ENCODE measurements at regions of chrX and their contacts with region 1.

Region 1: DNA sequence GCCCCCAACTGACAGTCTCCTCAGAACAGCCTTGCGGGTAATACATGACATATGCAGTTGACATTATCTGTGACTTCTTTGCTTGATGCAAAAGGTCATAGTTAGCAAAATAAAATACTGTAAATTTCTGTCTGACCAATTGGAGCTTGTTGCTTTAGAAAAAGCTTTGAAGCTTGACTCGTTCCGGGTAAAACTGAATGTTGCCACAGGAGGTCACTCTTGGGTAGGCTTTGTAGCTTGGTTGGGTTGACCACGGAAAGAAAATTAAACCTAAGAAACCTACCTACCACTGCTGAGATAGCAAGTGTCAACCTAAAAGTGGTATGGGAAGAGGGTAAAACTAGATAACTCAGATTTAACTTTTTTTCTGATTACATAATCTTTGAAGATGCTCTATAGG is 23.2 kb downstream of the PRPS2 start:
- DNase-seq: peak; percentile 59
- ATAC-seq: peak; percentile 97
- H3K4me3 ChIP-seq: no peak overlapping the region
- H3K27ac ChIP-seq: no peak overlapping the region
- H3K4me1 ChIP-seq: no peaks in the 10 kb centered on the region
- H3K27me3 ChIP-seq: no peaks in the 10 kb centered on the region
- CTCF ChIP-seq: peak; percentile 66 to 86 (median 69)
- EP300 ChIP-seq: no peak
- POLR2A ChIP-seq: no peak
- RAD21 ChIP-seq: peak; percentile 98

Region 2: DNA sequence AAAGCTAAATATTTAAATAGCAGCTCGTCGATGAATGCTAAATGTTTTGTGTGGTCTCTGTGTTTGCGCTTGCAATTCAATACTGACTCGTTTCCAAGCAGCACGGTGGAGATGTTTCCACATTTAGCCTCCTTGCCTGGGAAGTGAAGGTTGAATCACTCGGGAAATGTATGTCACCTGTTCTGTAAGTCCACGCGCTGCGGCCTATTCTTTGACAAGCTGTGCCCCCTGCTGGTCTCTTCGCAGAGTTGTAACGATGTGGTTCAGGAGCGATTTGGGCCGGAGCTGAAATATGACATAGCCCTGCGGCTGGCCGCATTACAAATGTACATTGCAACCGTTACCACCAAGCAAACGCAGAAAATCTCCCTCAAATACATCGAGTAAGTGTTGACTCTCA is 112.8 kb before region 1 on chrX:
- CTCF ChIA-PET with region 1: no interaction called
- POLR2A ChIA-PET with region 1: no interaction called
- RAD21 ChIA-PET with region 1: no interaction called
- SMC1A ChIA-PET with region 1: interaction called, 11 read pairs
- in situ Hi-C with region 1: no loop called
- intact Hi-C with region 1: no loop called
- DNase-seq: peak; percentile 12
- ATAC-seq: peak; percentile 98
- H3K4me3 ChIP-seq: no peak overlapping the region
- H3K27ac ChIP-seq: no peak overlapping the region
- H3K4me1 ChIP-seq: no peaks in the 10 kb centered on the region
- H3K27me3 ChIP-seq: no peaks in the 10 kb centered on the region
- CTCF ChIP-seq: peak; percentile 70 to 84 (median 71)
- EP300 ChIP-seq: no peak
- POLR2A ChIP-seq: no peak
- RAD21 ChIP-seq: peak; percentile 86

Region 3: GRCh38 chrX:12791257-12792228 is 22.9 kb before region 1 on chrX and contains the start of gene PRPS2:
- CTCF ChIA-PET with region 1: interaction called, 18 read pairs
- POLR2A ChIA-PET with region 1: no interaction called
- RAD21 ChIA-PET with region 1: interaction called, 20 read pairs
- SMC1A ChIA-PET with region 1: interaction called, 27 read pairs
- in situ Hi-C with region 1: no loop called
- intact Hi-C with region 1: no loop called
- DNase-seq: no peak
- ATAC-seq: peak; percentile 88
- H3K4me3 ChIP-seq: peak within 1 kb of the TSS; percentile 75
- H3K27ac ChIP-seq: peak within 1 kb of the TSS; percentile 58
- H3K4me1 ChIP-seq: no peaks in the 10 kb centered on the region
- H3K27me3 ChIP-seq: no peaks in the 10 kb centered on the region
- CTCF ChIP-seq: no peak
- EP300 ChIP-seq: no peak
- POLR2A ChIP-seq: peak; percentile 87
- RAD21 ChIP-seq: no peak
- polyA plus RNA-seq, gene PRPS2: 44.1 to 56.3 TPM

Region 4: GRCh38 chrX:12843668-12844279 is 29.4 kb after region 1 on chrX:
- CTCF ChIA-PET with region 1: interaction called, 23 read pairs
- POLR2A ChIA-PET with region 1: no interaction called
- RAD21 ChIA-PET with region 1: interaction called, 11 read pairs
- SMC1A ChIA-PET with region 1: interaction called, 28 read pairs
- in situ Hi-C with region 1: no loop called
- intact Hi-C with region 1: loop called (anchors 2 kb)
- DNase-seq: peak; percentile 85
- ATAC-seq: peak; percentile 92
- H3K4me3 ChIP-seq: peak overlapping the region; percentile 42; the same call in 1 of the 2 replicates
- H3K27ac ChIP-seq: peak overlapping the region; percentile 100
- H3K4me1 ChIP-seq: peaks cover 29% of the 10 kb centered on the region
- H3K27me3 ChIP-seq: no peaks in the 10 kb centered on the region
- CTCF ChIP-seq: no peak
- EP300 ChIP-seq: peak in 1 of 2 experiments; percentile 57; a peak in 1 of 4 replicates
- POLR2A ChIP-seq: no peak
- RAD21 ChIP-seq: no peak

Region 5: DNA sequence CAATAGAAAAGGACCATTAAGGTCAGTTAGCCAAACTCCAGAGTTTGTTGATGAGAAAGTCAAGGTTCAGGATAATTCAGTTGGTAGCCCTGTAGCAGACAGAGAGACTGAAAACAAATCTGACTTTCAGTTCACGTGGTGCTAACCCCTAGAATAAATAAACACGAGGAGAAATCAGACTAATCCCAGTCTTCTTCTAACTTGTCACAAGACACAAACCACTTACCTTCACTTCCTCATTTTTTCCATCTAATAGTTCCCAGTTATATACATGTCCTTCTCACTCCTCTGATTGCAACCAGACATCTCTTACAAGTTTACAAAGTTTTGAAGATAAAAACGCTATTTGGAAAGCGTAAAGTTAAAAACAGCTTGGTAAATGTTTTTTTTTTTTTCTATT is 60.2 kb after region 1 on chrX:
- CTCF ChIA-PET with region 1: interaction called, 22 read pairs
- POLR2A ChIA-PET with region 1: no interaction called
- RAD21 ChIA-PET with region 1: interaction called, 9 read pairs
- SMC1A ChIA-PET with region 1: interaction called, 51 read pairs
- in situ Hi-C with region 1: no loop called
- intact Hi-C with region 1: no loop called
- DNase-seq: no peak
- ATAC-seq: peak; percentile 49
- H3K4me3 ChIP-seq: 0 out of 2 replicates have a peak overlapping the region, but pooled peaks have one; percentile 34
- H3K27ac ChIP-seq: 0 out of 2 replicates have a peak overlapping the region, but pooled peaks have one; percentile 35
- H3K4me1 ChIP-seq: peaks cover 22% of the 10 kb centered on the region
- H3K27me3 ChIP-seq: no peaks in the 10 kb centered on the region
- CTCF ChIP-seq: no peak
- EP300 ChIP-seq: no peak
- POLR2A ChIP-seq: no peak
- RAD21 ChIP-seq: no peak

Region 6: DNA sequence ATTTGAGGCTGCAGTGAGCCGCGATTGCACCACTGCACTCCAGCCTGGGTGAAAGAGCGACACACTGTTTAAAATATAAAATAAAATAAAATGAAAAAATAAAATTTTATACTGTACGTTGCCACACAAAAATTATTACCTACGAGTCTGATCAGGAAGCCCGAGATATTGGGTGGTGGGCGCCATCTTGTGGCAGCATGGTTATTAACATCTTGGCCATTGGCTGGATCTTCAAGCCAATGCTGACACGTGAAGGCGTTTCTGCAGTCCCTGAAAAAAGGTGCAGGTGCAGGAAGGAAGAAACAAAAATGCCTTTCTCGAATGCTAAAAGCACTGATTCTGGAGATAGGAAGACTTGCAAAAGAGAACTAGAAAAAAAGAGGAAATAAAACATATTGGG is 87.1 kb after region 1 on chrX:
- CTCF ChIA-PET with region 1: interaction called, 431 read pairs
- POLR2A ChIA-PET with region 1: interaction called, 8 read pairs
- RAD21 ChIA-PET with region 1: interaction called, 277 read pairs
- SMC1A ChIA-PET with region 1: interaction called, 349 read pairs
- in situ Hi-C with region 1: no loop called
- intact Hi-C with region 1: loop called (anchors 1 kb)
- DNase-seq: no peak
- ATAC-seq: peak; percentile 93
- H3K4me3 ChIP-seq: no peak overlapping the region
- H3K27ac ChIP-seq: no peak overlapping the region
- H3K4me1 ChIP-seq: no peaks in the 10 kb centered on the region
- H3K27me3 ChIP-seq: no peaks in the 10 kb centered on the region
- CTCF ChIP-seq: peak; percentile 68 to 84 (median 75)
- EP300 ChIP-seq: no peak
- POLR2A ChIP-seq: no peak
- RAD21 ChIP-seq: peak; percentile 80

Region 7: GRCh38 chrX:13646154-13646549 is 831.7 kb after region 1 on chrX:
- CTCF ChIA-PET with region 1: interaction called, 4 read pairs
- POLR2A ChIA-PET with region 1: no interaction called
- RAD21 ChIA-PET with region 1: interaction called, 5 read pairs
- SMC1A ChIA-PET with region 1: no interaction called
- in situ Hi-C with region 1: no loop called
- intact Hi-C with region 1: loop called (anchors 5 kb)
- DNase-seq: no peak
- ATAC-seq: peak; percentile 80
- H3K4me3 ChIP-seq: no peak overlapping the region
- H3K27ac ChIP-seq: no peak overlapping the region
- H3K4me1 ChIP-seq: no peaks in the 10 kb centered on the region
- H3K27me3 ChIP-seq: no peaks in the 10 kb centered on the region; a peak in 1 of 4 replicates
- CTCF ChIP-seq: peak; percentile 67 to 80 (median 76)
- EP300 ChIP-seq: no peak
- POLR2A ChIP-seq: no peak
- RAD21 ChIP-seq: peak; percentile 72

Measured in GM12878 (cell line).